Heart right ventricle (tissue), 16 donors: ENCODE measurements at regions of chr18 and their contacts with region 1.

Region 1: DNA sequence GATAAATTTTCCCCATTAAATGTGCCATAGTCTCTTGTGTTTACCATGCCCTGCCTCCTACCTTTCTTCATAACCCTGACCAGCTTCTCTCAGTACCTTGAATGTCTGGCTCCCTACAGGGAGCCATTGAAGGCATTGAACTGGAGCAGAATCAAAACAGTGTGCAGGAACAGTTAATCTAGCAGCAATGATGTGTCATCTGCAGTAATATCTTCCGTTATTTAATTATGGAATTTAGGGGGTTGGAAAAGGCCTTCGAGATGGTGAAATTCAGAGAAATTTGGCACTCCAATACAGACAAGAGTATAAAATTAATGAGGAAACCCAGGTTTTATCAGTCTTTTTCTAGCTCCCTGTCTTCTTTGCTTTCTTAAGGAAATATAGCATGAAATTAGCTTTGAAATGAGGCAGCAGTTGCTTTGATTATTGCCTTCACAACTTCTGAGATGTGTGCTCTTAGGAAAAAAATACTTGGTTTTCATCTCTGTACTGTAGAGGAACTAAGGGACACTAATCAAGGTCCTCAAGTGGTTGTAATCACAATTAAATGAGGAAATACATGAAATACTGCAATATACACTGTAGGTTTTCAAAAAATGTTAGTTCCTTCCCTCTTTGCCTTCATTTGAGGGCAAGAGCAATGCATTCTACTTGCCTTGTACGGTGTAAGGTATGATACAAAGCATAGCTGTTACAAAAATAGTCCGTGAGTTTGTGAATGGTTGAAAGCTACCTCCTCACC is 369.1 kb downstream of the SETBP1 start:
- DNase-seq: no peak
- ATAC-seq: no peak
- H3K4me3 ChIP-seq: no peak overlapping the region
- H3K27ac ChIP-seq: no peak overlapping the region
- H3K4me1 ChIP-seq: peaks cover 0 to 9% (median 0%) of the 10 kb centered on the region in 9 donors
- H3K27me3 ChIP-seq: no peaks in the 10 kb centered on the region
- CTCF ChIP-seq: no peak

Region 2: DNA sequence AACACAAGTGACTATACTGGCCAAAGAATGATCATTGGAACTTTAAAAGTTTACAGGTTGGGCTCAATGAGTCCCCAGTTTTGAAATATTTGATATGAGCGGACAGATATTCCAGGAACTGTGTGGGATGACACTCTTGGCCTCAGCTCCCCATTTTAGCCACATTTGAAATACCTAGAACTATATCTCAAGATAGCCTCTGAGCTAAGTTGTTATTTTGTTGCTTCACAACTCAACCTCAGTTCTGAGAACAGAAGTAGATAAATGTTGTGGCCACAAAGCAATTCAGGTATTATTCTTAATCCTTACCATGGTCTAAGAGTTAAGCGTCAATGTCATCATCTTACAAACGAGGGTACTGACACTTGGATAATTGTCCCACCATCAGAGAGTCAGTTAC is 541.3 kb before region 1 on chr18:
- intact Hi-C with region 1: no loop called
- DNase-seq: no peak
- ATAC-seq: no peak
- H3K4me3 ChIP-seq: no peak overlapping the region
- H3K27ac ChIP-seq: peak overlapping the region in 1 of 10 donors; percentile 68
- H3K4me1 ChIP-seq: peaks cover 0 to 18% (median 0%) of the 10 kb centered on the region in 9 donors
- H3K27me3 ChIP-seq: no peaks in the 10 kb centered on the region
- CTCF ChIP-seq: no peak

Region 3: GRCh38 chr18:44996261-44996660 is 53.5 kb before region 1 on chr18:
- intact Hi-C with region 1: loop called in 1 of 10 experiments (anchors 10 kb)
- DNase-seq: no peak
- ATAC-seq: no peak
- H3K4me3 ChIP-seq: no peak overlapping the region
- H3K27ac ChIP-seq: no peak overlapping the region
- H3K4me1 ChIP-seq: no peaks in the 10 kb centered on the region
- H3K27me3 ChIP-seq: no peaks in the 10 kb centered on the region
- CTCF ChIP-seq: no peak